Stomach (tissue), 19 donors: ENCODE measurements at regions of chrX and their contacts with region 1.

Region 1: GRCh38 chrX:130190801-130191200 is 19.0 kb downstream of the RAB33A start:
- DNase-seq: no peak
- H3K4me3 ChIP-seq: no peak overlapping the region
- H3K27ac ChIP-seq: no peak overlapping the region
- H3K4me1 ChIP-seq: no peaks in the 10 kb centered on the region
- H3K27me3 ChIP-seq: no peaks in the 10 kb centered on the region
- CTCF ChIP-seq: no peak
- EP300 ChIP-seq: no peak
- POLR2A ChIP-seq: no peak

Region 2: GRCh38 chrX:130079824-130080406 is 110.9 kb before region 1 on chrX:
- intact Hi-C with region 1: loop called (anchors 5 kb)
- DNase-seq: peak; percentile 67 to 86
- H3K4me3 ChIP-seq: no peak overlapping the region
- H3K27ac ChIP-seq: peak overlapping the region in 2 of 5 donors; percentile 14 to 67
- H3K4me1 ChIP-seq: peaks cover 4 to 42% (median 20%) of the 10 kb centered on the region in 4 donors
- H3K27me3 ChIP-seq: no peaks in the 10 kb centered on the region
- CTCF ChIP-seq: peak in 5 of 7 experiments; percentile 39 to 74 (median 57)
- EP300 ChIP-seq: no peak
- POLR2A ChIP-seq: no peak